Activated CD4-positive, alpha-beta memory T cell treated with anti-CD3 and anti-CD28 coated beads, Interleukin-2, amount 10 ng/mL, durations not matched to agents 7 days and 5 days (primary cell): ENCODE measurements at regions of chr17 and their contacts with region 1.

Region 1: DNA sequence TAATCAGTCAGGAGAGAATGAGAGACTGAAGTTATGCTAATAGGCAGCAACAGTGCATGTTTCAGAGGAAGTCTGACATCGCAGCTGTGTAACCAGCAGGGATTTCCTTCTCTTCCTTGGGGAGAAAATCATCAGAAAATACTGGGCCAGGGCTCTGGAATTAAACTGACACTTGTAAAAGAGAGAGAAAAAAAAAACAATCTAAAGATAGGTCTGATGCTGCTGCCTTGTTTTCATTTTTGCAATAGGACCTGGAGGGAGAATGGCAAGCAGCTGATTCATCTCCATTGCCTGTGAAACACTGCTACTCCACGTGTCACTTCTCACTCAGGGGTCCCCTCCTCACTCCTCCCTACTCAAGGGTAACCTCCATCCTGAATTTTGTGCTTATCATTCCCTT is 17.7 kb upstream of the CORO6 start:
- DNase-seq: no peak
- H3K4me3 Mint-ChIP-seq: no peak overlapping the region
- H3K27ac Mint-ChIP-seq: no peak overlapping the region
- H3K4me1 Mint-ChIP-seq: peaks cover 19% of the 10 kb centered on the region
- H3K27me3 Mint-ChIP-seq: no peaks in the 10 kb centered on the region

Region 2: GRCh38 chr17:29625037-29625750 is 15.2 kb before region 1 on chr17:
- CTCF ChIA-PET with region 1: interaction called, 11 read pairs
- POLR2A ChIA-PET with region 1: interaction called, 8 read pairs
- DNase-seq: no peak
- H3K4me3 Mint-ChIP-seq: no peak overlapping the region
- H3K27ac Mint-ChIP-seq: no peak overlapping the region
- H3K4me1 Mint-ChIP-seq: peaks cover 51% of the 10 kb centered on the region
- H3K27me3 Mint-ChIP-seq: peaks cover 9% of the 10 kb centered on the region

Region 3: DNA sequence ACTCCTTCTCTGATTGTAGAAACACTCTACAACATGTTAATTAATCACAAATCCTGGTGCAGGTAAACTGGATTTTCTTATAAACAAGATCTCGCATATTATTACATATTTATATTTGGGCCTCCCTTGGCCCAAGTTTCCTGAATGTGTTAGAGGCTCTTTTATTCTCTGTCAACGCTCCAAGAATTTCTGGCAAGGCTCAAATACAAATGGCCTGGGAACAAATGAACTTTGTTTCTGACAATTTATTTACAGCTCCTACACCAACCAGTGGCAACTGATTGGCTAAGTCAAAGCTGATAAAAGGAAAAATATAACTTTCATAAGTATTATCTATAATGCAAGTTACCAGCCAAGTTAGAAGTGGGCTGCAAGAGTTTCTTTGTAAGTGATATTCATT is 47.2 kb after region 1 on chr17:
- CTCF ChIA-PET with region 1: interaction called, 10 read pairs
- POLR2A ChIA-PET with region 1: no interaction called
- DNase-seq: no peak
- H3K4me3 Mint-ChIP-seq: no peak overlapping the region
- H3K27ac Mint-ChIP-seq: no peak overlapping the region
- H3K4me1 Mint-ChIP-seq: peaks cover 17% of the 10 kb centered on the region
- H3K27me3 Mint-ChIP-seq: no peaks in the 10 kb centered on the region

Region 4: DNA sequence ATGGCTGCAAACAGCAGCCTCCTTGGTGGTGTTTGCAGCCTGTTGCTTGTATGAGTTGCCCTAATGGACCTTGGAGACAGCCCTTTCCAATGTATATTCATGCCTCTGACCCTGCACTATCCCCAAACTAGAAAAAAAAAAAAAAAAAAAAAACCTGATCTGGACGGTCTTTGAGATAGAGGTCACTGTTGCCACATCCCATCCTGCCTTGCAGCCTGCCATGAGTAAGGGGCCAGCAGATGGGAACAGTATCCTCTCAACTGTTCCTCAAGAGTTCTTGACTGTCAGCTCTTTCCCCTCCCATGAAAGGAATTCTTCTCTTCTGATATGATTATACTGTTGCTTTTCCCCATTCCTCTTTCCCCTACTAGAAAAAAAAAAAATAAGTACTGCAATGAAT is 137.2 kb after region 1 on chr17:
- CTCF ChIA-PET with region 1: interaction called, 114 read pairs
- POLR2A ChIA-PET with region 1: interaction called, 19 read pairs
- DNase-seq: no peak
- H3K4me3 Mint-ChIP-seq: no peak overlapping the region
- H3K27ac Mint-ChIP-seq: no peak overlapping the region
- H3K4me1 Mint-ChIP-seq: peaks cover 9% of the 10 kb centered on the region
- H3K27me3 Mint-ChIP-seq: no peaks in the 10 kb centered on the region

Region 5: GRCh38 chr17:29807520-29808351 is 167.3 kb after region 1 on chr17:
- CTCF ChIA-PET with region 1: interaction called, 21 read pairs
- POLR2A ChIA-PET with region 1: no interaction called
- DNase-seq: peak; percentile 72
- H3K4me3 Mint-ChIP-seq: no peak overlapping the region
- H3K27ac Mint-ChIP-seq: no peak overlapping the region
- H3K4me1 Mint-ChIP-seq: peaks cover 19% of the 10 kb centered on the region
- H3K27me3 Mint-ChIP-seq: no peaks in the 10 kb centered on the region